Cardiac septum (tissue), 1 donor: ENCODE measurements at regions of chr9 and their contacts with region 1.

Region 1: DNA sequence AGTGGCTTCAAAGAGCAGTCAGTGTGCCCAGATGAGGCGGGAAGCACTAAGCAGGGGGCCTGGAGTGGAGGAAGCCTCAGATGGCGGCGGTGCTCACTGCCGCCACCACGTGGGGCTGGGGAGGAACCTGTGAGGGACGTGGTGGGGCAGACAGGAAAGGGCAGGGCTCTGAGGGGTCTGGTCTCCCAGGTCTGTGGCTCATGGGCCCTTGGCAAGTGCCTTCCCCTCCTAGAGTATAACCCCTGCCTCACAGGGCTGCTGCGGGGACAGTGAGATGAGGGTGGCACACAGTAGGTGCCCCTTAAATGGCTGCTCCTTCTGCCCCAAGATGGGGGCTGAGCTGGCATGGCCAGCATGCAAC is 26.6 kb downstream of the NR5A1 start:
- DNase-seq: no peak

Region 2: DNA sequence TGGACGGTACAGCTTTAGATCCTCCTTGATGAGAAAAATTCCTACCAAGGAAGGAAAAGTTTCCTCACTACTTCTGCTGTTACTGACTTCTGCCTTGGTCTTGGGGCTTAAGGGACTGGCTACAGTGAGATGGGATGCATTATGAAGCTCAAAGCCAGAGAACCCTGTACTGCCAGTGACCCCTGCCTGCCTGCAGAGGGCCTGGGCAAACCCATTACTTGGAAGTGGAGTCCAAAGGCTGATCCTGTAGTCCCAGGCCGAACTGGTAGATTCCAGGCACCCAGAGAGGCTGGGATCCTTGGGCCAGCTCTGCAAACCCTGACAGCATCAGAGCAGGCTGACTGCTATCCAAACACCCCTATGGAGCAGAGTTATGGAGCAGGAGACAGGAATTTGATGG is 52.3 kb after region 1 on chr9:
- intact Hi-C with region 1: loop called (anchors 5 kb)
- DNase-seq: no peak